Transverse colon (tissue), 4 donors: ENCODE measurements at regions of chr22 and their contacts with region 1.

Region 1: GRCh38 chr22:26485013-26485412 is 1.3 kb downstream of the SRRD start:
- DNase-seq: no peak
- H3K4me3 ChIP-seq: no peak overlapping the region
- H3K27ac ChIP-seq: peak overlapping the region; percentile 92 to 95 (median 94)
- H3K4me1 ChIP-seq: peaks cover 32 to 50% (median 40%) of the 10 kb centered on the region in 4 donors
- H3K27me3 ChIP-seq: no peaks in the 10 kb centered on the region
- CTCF ChIP-seq: no peak
- EP300 ChIP-seq: no peak
- POLR2A ChIP-seq: no peak

Region 2: DNA sequence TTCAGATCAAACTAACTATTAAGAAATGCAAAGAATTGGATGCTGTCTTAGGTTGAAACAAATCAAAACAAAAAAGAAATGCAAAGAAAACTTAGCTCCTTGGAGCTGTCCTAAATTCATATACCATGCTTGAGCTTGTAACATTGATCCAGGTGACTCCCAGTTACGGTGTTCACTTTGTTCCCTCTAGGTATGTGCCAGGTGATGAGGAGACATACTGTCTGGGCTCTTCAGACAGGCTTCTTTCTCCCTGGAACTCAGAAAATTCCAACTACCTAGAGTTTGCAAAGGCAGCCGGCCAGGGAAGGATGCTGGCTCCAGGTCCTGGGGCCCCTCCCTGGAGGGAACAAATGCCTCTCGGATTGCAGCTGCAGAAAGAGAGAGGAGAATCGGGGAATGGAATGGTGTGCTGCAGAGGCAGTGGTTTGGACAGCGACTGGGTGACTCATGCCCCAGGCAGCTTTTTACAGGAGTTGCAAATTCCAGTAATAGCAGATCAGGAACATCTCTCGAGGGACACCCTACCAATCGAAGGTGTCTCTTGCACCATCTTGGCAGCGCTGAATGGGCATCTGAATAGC is 68.3 kb before region 1 on chr22:
- in situ Hi-C with region 1: no loop called
- intact Hi-C with region 1: no loop called
- DNase-seq: no peak
- H3K4me3 ChIP-seq: no peak overlapping the region
- H3K27ac ChIP-seq: peak overlapping the region in 1 of 4 donors; percentile 55
- H3K4me1 ChIP-seq: peaks cover 0 to 18% (median 3%) of the 10 kb centered on the region in 4 donors
- H3K27me3 ChIP-seq: peaks cover 23% of the 10 kb centered on the region
- CTCF ChIP-seq: no peak
- EP300 ChIP-seq: no peak
- POLR2A ChIP-seq: no peak

Region 3: DNA sequence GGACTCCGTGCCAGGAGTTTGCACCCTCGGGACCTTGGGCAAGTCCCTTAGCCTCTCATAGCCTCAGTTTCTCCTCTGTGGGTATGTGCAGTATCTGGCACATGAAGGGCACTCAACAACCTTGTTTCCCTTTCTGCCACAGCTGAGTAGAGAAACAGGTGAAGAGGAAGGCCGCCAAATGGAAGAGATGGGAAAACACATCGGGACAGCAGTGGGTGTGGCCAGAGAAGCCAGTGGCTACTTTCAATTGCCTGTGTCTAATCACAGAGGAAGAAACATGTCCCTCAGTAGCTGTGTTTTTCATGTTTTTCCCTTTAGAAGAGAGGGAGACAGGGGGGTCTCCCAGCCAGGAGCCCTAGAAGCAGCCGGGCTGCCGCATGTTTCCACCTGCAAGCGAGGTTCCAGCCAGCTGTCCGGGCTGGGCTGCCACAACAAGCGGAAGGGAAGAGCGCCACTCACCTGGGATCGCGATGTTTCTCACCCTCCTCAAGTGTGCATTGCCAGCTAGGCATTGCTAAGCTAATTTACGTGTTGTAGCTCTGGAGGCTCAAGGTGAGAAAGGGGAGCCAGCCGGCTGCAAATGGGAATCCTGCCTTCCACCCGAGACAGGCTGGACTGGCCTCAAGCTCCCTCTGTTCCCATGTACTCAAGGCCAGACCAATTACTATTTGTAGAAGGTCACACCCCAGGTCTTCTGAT is 39.3 kb before region 1 on chr22:
- in situ Hi-C with region 1: no loop called
- intact Hi-C with region 1: no loop called
- DNase-seq: no peak
- H3K4me3 ChIP-seq: no peak overlapping the region
- H3K27ac ChIP-seq: no peak overlapping the region
- H3K4me1 ChIP-seq: no peaks in the 10 kb centered on the region
- H3K27me3 ChIP-seq: no peaks in the 10 kb centered on the region
- CTCF ChIP-seq: no peak
- EP300 ChIP-seq: no peak
- POLR2A ChIP-seq: no peak

Region 4: GRCh38 chr22:28103596-28103995 is 1618.6 kb after region 1 on chr22:
- in situ Hi-C with region 1: no loop called
- intact Hi-C with region 1: loop called (anchors 5 kb)
- DNase-seq: no peak
- H3K4me3 ChIP-seq: no peak overlapping the region
- H3K27ac ChIP-seq: peak overlapping the region in 3 of 4 donors; percentile 21 to 39 (median 38)
- H3K4me1 ChIP-seq: peaks cover 0 to 6% (median 0%) of the 10 kb centered on the region in 4 donors
- H3K27me3 ChIP-seq: no peaks in the 10 kb centered on the region
- CTCF ChIP-seq: no peak
- EP300 ChIP-seq: no peak
- POLR2A ChIP-seq: no peak